ENCODE measurements at regions of chr12 and their contacts with region 1.

Region 1: DNA sequence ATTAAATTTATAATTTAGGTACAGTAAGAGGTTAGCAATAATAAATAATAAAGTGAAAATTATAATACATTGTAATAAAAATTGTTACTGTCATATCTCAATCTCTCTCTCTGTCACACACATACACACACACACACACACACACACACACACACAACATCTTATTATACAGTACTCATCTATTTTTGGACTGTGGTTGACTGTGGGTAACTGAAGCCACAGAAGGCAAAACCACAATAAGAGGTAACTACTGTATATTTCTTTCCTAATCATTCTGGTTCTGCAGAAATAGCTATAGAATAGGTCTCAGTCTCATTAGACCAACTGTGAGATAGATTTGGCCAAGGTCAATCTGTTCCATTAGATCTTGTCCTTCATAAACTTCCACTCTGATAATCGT is 33.1 kb upstream of the PTPRO start:
- DNase-seq: no peak
- H3K4me3 ChIP-seq: no peak overlapping the region
- H3K27ac ChIP-seq: no peak overlapping the region
- H3K4me1 ChIP-seq: no peaks in the 10 kb centered on the region
- H3K27me3 ChIP-seq: no peaks in the 10 kb centered on the region
- CTCF ChIP-seq: no peak
- EP300 ChIP-seq: no peak
- POLR2A ChIP-seq: no peak

Region 2: DNA sequence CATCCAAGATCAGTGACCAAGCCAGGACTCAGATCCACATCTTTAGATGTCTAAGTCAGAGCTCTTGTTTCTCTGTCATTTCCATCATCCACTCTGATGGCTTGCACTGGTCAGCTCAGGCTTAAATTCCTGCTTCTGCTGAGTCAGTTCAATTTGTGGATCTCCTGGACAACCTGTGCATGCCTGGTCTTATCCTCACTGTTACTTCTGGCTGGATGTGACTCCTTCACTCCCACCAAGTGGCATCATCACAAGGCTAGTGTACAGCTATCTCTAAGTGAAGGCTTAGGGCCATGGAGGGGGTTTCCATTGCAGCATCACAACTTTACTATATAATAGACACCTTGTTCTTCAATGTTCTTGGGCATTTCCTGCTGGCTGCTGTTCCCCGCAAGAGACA is 1989.7 kb before region 1 on chr12:
- in situ Hi-C with region 1: no loop called
- intact Hi-C with region 1: loop called (anchors 5 kb)
- DNase-seq: no peak
- H3K4me3 ChIP-seq: no peak overlapping the region
- H3K27ac ChIP-seq: no peak overlapping the region
- H3K4me1 ChIP-seq: no peaks in the 10 kb centered on the region
- H3K27me3 ChIP-seq: no peaks in the 10 kb centered on the region
- CTCF ChIP-seq: no peak
- EP300 ChIP-seq: no peak
- POLR2A ChIP-seq: no peak

Region 3: DNA sequence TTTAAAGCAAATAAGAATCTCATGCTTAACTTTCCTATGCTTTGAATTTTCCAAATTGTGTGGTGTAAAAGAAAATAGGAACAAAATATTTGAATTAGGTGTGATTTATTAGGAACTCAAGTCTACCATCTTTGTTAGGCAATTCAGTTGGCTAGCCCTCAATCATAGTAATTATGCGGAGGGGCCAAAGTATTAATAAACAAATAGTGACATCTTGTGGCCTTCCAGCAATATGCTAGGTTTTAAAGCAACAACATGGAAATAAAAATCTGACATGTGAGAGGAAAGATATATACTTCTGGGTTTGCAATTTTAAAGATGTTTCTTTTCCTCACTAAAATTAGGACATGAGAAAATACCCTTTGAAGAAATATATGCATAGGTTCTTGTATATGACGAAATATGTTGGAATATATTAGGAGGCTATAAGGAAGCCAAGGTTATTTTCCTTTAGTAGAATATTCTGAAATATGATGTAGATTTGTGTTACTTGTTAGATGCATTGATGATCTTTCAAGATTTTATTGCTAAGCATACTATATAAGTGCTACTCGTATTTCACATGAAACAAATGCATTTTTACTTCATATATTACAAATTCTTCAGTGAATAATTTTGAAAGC is 233.5 kb after region 1 on chr12:
- in situ Hi-C with region 1: loop called in 1 of 4 experiments (anchors 10 kb)
- intact Hi-C with region 1: no loop called
- DNase-seq: no peak
- H3K4me3 ChIP-seq: no peak overlapping the region
- H3K27ac ChIP-seq: no peak overlapping the region
- H3K4me1 ChIP-seq: no peaks in the 10 kb centered on the region
- H3K27me3 ChIP-seq: peaks cover 4% of the 10 kb centered on the region
- CTCF ChIP-seq: peak; percentile 37 to 47 (median 40)
- EP300 ChIP-seq: no peak
- POLR2A ChIP-seq: no peak